BJ (cell line): ENCODE measurements at regions of chr15 and their contacts with region 1.

Region 1: GRCh38 chr15:38714309-38715072 is 149.9 kb upstream of the RASGRP1 start:
- DNase-seq: peak; percentile 94
- H3K4me3 ChIP-seq: no peak overlapping the region
- H3K27me3 ChIP-seq: no peaks in the 10 kb centered on the region
- CTCF ChIP-seq: no peak

Region 2: DNA sequence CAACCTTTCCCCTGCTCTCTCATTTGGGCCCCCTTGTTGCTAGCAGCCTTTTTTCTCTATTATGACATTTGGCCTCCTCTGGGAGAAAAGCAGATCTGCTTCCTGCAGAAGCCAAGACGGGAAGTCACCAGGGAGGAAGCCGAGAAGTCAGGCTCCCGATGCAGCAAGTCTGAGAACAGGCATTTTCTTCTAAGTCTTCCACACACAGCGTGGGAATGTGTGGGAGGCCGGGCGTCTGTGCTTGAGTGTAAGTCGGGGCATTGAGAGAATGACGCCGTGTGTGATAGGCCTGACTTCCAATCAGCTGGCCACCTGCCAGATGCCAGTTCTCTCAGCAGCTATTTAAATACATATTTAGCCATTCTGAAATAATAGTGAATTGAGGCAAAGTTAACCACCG is 336.3 kb before region 1 on chr15:
- CTCF ChIA-PET with region 1: no interaction called
- POLR2A ChIA-PET with region 1: no interaction called
- DNase-seq: no peak
- H3K4me3 ChIP-seq: no peak overlapping the region
- H3K27me3 ChIP-seq: peaks cover 3% of the 10 kb centered on the region; the same call in 1 of the 2 replicates
- CTCF ChIP-seq: no peak

Region 3: GRCh38 chr15:38536201-38536676 is 178.3 kb before region 1 on chr15:
- CTCF ChIA-PET with region 1: no interaction called
- POLR2A ChIA-PET with region 1: no interaction called
- DNase-seq: peak; percentile 97
- H3K4me3 ChIP-seq: no peak overlapping the region
- H3K27me3 ChIP-seq: no peaks in the 10 kb centered on the region
- CTCF ChIP-seq: no peak

Region 4: DNA sequence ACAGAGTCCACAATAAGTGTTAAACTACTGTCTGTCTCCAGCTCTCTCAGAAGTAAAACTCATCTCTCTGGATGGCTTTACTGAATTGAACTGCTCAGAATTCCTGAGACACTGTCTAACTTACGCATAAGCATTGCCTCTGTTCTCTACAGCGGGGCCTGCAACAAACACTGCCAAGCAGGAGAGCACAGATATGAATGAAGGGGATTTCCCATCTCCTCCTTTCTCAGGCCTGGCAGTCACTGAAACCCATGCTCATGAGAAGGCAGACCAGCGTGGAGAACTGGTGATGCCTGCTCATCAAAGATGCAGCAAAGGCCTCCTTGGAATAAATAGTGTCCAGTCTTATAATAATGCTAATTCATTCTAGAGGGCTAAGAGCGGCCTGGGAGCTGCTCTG is 160.1 kb before region 1 on chr15:
- CTCF ChIA-PET with region 1: no interaction called
- POLR2A ChIA-PET with region 1: no interaction called
- DNase-seq: no peak
- H3K4me3 ChIP-seq: no peak overlapping the region
- H3K27me3 ChIP-seq: no peaks in the 10 kb centered on the region
- CTCF ChIP-seq: no peak

Region 5: GRCh38 chr15:38690689-38691332 is 23.7 kb before region 1 on chr15:
- CTCF ChIA-PET with region 1: no interaction called
- POLR2A ChIA-PET with region 1: interaction called, 14 read pairs
- DNase-seq: no peak
- H3K4me3 ChIP-seq: no peak overlapping the region
- H3K27me3 ChIP-seq: no peaks in the 10 kb centered on the region
- CTCF ChIP-seq: peak; percentile 80

Region 6: GRCh38 chr15:38724827-38725226 is 10.3 kb after region 1 on chr15:
- CTCF ChIA-PET with region 1: no interaction called
- POLR2A ChIA-PET with region 1: no interaction called
- DNase-seq: no peak
- H3K4me3 ChIP-seq: no peak overlapping the region
- H3K27me3 ChIP-seq: no peaks in the 10 kb centered on the region
- CTCF ChIP-seq: no peak

Region 7: DNA sequence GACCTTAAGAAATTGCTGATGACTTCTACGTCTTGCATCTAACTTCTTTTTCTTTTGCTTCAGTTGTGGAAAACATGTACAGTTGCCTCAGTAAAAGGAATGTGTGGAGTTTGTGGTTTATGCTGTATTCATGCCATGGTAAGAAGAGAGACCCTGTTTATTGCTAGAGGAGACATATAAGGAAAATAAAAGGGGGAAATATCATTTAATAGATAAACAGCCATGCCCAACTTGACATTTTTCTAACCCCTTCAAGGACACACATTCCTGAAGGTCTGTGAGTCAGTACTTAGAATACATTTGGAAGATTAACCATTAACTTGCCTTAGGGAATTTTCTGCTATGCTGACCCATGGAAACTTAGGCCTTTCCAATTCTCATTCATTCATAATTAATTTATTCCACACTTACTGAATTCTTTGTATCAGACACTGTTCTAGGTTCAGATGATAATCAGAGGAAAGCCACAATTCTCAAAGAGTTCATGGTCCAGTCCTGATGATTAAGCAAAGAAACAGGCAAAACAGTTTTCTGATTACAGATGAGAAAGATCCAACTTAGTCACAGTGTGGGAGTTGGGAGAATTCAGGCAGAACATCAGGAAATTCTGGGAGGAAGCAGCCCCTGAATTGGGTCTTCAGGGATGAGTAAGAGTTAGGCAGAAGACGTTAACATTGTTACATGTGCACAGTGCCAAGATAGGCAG is 179.9 kb after region 1 on chr15:
- CTCF ChIA-PET with region 1: no interaction called
- POLR2A ChIA-PET with region 1: interaction called, 14 read pairs
- DNase-seq: peak; percentile 87
- H3K4me3 ChIP-seq: no peak overlapping the region
- H3K27me3 ChIP-seq: no peaks in the 10 kb centered on the region
- CTCF ChIP-seq: no peak

Region 8: DNA sequence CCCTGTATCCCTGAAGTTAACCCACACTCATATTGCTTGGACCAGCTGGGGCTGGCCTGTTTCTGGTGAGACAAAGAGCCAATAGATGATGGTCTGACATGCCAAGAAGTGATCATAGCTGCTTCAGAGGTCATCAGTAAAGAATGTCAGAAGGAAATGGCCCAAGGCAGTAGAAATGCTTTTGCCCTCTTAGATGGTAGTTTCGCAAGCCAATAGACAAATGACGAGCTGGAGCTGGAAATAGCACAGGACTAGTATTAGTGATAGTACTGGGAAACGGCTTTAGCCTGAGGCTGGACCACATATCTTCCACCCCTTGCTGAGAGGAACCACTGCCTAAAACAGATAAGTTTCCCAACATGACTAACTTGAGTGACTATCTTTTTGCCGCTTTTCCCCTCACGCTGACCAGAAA is 690.3 kb after region 1 on chr15:
- CTCF ChIA-PET with region 1: no interaction called
- POLR2A ChIA-PET with region 1: interaction called, 10 read pairs
- DNase-seq: peak; percentile 99
- H3K4me3 ChIP-seq: no peak overlapping the region
- H3K27me3 ChIP-seq: no peaks in the 10 kb centered on the region
- CTCF ChIP-seq: no peak